ENCODE measurements at regions of chr17 and their contacts with region 1.

Region 1: DNA sequence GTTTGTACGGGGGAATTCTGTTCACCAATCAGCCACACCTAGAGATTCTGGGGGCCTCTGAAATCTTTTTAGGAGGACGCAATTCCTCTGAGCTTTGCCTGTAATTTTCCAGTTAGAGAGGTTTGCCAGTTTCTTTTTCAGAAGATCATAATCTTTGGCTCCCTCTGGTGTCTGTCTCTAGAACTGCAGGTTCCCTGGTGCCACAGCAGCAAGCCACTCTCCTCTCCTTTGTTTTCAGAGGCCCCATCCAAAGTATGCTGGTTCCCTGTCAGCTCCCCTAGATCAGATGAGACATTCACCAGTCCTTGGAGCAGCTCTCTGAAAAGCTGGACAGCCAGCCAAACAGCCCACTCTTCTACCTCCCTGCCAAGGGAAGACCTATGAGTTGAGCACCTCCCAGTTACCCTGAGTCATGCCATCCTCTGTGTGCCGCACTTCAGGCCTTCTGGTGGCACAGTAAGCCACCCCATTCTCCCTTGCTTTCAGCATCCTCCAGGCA is 36.1 kb downstream of the RNF112 start:
- DNase-seq: peak in 9 of 10 donors; percentile 56 to 84 (median 65)
- H3K4me3 ChIP-seq: peak overlapping the region in 6 of 59 donors; percentile 2 to 42 (median 20)
- H3K27ac ChIP-seq: peak overlapping the region; percentile 8 to 97 (median 92)
- H3K27me3 ChIP-seq: no peaks in the 10 kb centered on the region
- CTCF ChIP-seq: peak; percentile 94 to 100 (median 98)

Region 2: GRCh38 chr17:19377602-19378392 is 69.3 kb before region 1 on chr17:
- intact Hi-C with region 1: loop called (anchors 5 kb)
- DNase-seq: peak; percentile 97 to 100 (median 98)
- H3K4me3 ChIP-seq: peak overlapping the region; percentile 67 to 99 (median 87)
- H3K27ac ChIP-seq: peak overlapping the region; percentile 79 to 99 (median 96)
- H3K27me3 ChIP-seq: no peaks in the 10 kb centered on the region
- CTCF ChIP-seq: peak in 52 of 56 donors; percentile 7 to 70 (median 40)

Region 3: DNA sequence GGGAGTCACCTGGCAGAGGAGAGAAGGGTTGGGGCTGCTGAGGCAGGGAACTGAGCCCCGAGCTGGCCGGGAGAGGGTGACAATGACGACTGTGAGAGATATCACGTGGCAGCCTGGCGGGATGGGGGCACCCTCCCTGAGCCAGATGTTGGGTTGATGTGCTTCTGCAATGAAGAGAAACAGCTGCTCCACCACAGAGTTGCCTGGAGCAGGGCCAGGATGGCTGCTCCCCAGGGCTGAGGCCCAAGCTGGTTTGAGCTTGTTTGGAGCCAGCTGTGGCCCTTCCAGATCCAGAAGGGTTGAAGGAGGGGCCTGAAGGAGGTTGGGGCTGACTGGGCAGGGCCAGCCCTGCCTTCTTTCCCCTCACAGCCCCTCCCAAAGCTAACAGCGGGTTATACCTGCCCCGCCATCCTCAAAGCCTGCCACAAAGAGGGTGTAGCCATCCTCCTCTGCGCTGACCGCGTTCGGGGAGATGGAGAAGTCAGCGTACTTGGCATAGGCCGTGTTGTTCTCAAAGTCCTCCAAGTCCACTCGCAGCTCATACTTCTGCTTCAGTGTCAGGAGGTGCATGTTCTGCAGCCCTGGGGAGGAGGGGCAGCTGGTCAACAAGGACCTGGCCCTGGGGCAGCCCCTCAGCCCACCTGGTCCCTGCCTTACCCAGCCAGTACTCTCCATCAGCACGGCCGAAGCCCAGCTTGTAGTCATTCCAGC is 62.3 kb before region 1 on chr17:
- intact Hi-C with region 1: loop called in 1 of 2 experiments (anchors 5 kb)
- DNase-seq: peak in 9 of 10 donors; percentile 85 to 95 (median 89)
- H3K4me3 ChIP-seq: peak overlapping the region in 18 of 59 donors; percentile 1 to 45 (median 16)
- H3K27ac ChIP-seq: peak overlapping the region; percentile 5 to 93 (median 81)
- H3K27me3 ChIP-seq: no peaks in the 10 kb centered on the region
- CTCF ChIP-seq: peak in 12 of 56 donors; percentile 9 to 34 (median 17)

Region 4: DNA sequence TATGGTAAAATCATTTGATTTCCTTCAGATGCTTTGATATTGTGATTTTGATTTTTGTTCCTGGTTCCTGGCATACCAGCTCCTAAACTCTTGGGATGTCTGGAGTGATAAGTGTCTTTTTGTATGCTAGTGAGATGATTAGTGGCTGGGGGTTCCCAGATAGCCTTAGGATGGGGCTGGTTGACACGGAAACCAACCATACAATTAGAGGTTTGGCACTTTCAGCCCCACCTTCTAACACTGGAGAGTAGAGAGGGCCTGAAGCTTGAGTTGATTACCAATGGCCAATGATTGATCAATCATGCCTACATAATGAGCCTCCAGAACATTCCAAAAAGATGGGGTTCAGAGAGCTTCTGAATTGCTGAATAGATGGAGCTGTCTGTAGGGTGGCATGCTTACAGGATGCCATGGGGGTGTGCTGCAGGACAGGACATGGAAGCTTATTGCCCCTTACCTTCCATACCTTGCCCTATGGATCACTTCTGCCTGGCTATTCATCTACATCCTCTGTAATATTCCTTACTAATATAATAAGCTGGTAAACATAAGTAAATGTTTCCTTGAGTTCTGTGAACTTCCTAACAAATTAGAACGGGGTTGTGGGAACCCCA is 13.3 kb before region 1 on chr17:
- intact Hi-C with region 1: no loop called
- DNase-seq: no peak
- H3K4me3 ChIP-seq: no peak overlapping the region
- H3K27ac ChIP-seq: no peak overlapping the region
- H3K27me3 ChIP-seq: no peaks in the 10 kb centered on the region
- CTCF ChIP-seq: no peak

Region 5: GRCh38 chr17:19482576-19482975 is 35.4 kb after region 1 on chr17:
- intact Hi-C with region 1: no loop called
- DNase-seq: no peak
- H3K4me3 ChIP-seq: no peak overlapping the region
- H3K27ac ChIP-seq: no peak overlapping the region
- H3K27me3 ChIP-seq: no peaks in the 10 kb centered on the region
- CTCF ChIP-seq: no peak

Region 6: GRCh38 chr17:19507775-19508576 is 60.8 kb after region 1 on chr17:
- intact Hi-C with region 1: loop called (anchors 5 kb)
- DNase-seq: peak; percentile 83 to 96 (median 88)
- H3K4me3 ChIP-seq: peak overlapping the region; percentile 41 to 88 (median 72)
- H3K27ac ChIP-seq: peak overlapping the region; percentile 68 to 97 (median 93)
- H3K27me3 ChIP-seq: no peaks in the 10 kb centered on the region
- CTCF ChIP-seq: peak in 29 of 56 donors; percentile 6 to 53 (median 28)

Region 7: DNA sequence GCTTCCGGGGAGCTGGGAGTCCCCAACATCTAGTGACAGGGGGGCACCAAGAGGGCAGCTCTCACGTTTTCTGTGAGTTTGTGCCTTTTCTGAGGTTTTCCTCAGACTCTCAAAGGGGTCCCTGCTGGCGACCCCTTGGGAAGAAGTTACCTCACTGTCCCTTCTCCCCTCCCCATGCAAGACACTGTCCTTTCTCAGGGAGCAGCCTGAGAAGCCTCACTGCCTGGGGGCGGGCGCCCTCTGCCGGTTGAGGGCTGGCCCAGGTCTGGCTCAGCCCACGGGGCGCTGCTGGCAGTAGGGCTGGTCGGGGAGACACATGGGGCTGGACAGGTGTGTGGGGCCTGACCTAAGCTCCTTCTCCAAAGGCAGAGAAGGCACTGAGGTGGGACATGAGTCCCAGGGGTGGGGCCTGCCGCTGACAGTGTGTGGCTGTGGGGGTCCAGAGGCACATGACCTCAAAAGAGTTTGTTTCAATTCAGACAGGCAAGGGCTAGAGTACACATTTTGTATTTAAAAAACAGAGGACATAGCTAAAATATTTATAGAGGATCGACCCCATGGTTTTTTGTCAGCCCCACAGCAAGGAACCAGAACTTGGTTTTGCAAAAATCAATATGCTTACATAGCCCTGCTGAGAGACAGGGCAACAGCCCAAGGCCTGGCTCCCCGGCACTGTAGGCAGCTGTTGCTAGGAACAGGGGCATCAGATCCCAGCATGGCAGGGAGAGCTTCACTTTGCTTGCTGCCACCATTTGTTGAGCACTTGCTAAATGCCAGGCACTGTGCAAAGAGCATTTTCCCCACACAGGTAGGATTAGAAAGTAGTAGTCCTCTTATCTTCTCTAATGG is 319.5 kb after region 1 on chr17:
- intact Hi-C with region 1: loop called in 1 of 2 experiments (anchors 5 kb)
- DNase-seq: peak; percentile 77 to 91 (median 84)
- H3K4me3 ChIP-seq: peak overlapping the region in 4 of 59 donors; percentile 5 to 23 (median 8)
- H3K27ac ChIP-seq: peak overlapping the region in 9 of 59 donors; percentile 6 to 58 (median 39)
- H3K27me3 ChIP-seq: no peaks in the 10 kb centered on the region
- CTCF ChIP-seq: peak; percentile 71 to 99 (median 97)

Measured in dorsolateral prefrontal cortex (tissue), 120 donors.